GM12878 (cell line): ENCODE measurements at regions of chr12 and their contacts with region 1.

Region 1: GRCh38 chr12:94676031-94676641 is 25.8 kb upstream of the TMCC3 start:
- DNase-seq: peak; percentile 65
- ATAC-seq: peak; percentile 84
- H3K4me3 ChIP-seq: no peak overlapping the region; the same call in 1 of the 2 replicates
- H3K27ac ChIP-seq: peak overlapping the region; percentile 76
- H3K4me1 ChIP-seq: peaks cover 27% of the 10 kb centered on the region
- H3K27me3 ChIP-seq: no peaks in the 10 kb centered on the region
- CTCF ChIP-seq: no peak
- EP300 ChIP-seq: peak; percentile 42 to 56; a peak in 2 of 4 replicates
- POLR2A ChIP-seq: no peak
- RAD21 ChIP-seq: no peak

Region 2: DNA sequence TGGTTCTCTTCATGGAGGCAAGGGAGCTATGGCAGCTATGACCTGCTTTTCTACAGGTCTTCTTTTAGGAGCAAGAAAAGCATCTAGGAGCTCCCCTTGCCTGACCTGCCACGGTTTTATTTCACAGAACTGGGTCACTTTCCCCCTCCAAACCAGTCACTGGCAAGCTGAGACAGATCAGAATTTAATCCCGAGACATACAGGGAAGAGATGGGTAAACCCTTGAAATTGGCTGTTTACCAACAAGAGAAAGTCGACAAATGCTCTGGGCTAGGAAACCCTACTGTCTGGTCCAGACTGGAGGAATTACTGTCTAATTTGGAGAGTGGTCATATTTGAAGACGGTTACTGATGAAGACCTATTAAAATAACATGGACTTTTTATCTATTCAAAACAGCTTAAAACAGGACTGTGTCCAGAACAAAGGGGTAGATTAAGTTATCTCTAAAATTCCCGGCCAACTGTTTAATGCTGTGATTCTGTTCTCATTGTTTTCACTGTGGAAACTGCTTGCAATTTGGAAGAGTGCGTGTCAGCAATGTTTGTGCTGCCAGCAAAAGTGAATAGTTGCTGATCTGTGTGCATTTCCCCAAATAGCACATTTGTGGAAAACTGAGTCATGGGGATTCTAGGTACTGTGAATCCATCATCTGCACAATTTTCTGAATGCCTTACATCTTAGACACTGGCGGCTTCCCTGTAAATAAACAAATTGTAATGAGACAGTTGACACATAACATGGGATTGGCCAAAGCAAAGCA is 1673.7 kb before region 1 on chr12:
- CTCF ChIA-PET with region 1: no interaction called
- POLR2A ChIA-PET with region 1: interaction called, 10 read pairs
- RAD21 ChIA-PET with region 1: no interaction called
- SMC1A ChIA-PET with region 1: no interaction called
- in situ Hi-C with region 1: no loop called
- intact Hi-C with region 1: no loop called
- DNase-seq: no peak
- ATAC-seq: no peak
- H3K4me3 ChIP-seq: no peak overlapping the region
- H3K27ac ChIP-seq: no peak overlapping the region
- H3K4me1 ChIP-seq: peaks cover 11% of the 10 kb centered on the region
- H3K27me3 ChIP-seq: no peaks in the 10 kb centered on the region
- CTCF ChIP-seq: no peak
- EP300 ChIP-seq: no peak
- POLR2A ChIP-seq: no peak
- RAD21 ChIP-seq: no peak

Region 3: GRCh38 chr12:95083938-95084337 is 407.8 kb after region 1 on chr12:
- CTCF ChIA-PET with region 1: no interaction called
- POLR2A ChIA-PET with region 1: no interaction called
- RAD21 ChIA-PET with region 1: no interaction called
- SMC1A ChIA-PET with region 1: no interaction called
- in situ Hi-C with region 1: no loop called
- intact Hi-C with region 1: no loop called
- DNase-seq: no peak
- ATAC-seq: no peak
- H3K4me3 ChIP-seq: no peak overlapping the region
- H3K27ac ChIP-seq: no peak overlapping the region
- H3K4me1 ChIP-seq: peaks cover 18% of the 10 kb centered on the region
- H3K27me3 ChIP-seq: no peaks in the 10 kb centered on the region
- CTCF ChIP-seq: no peak
- EP300 ChIP-seq: no peak
- POLR2A ChIP-seq: no peak
- RAD21 ChIP-seq: no peak